ENCODE measurements at regions of chr3 and their contacts with region 1.

Region 1: DNA sequence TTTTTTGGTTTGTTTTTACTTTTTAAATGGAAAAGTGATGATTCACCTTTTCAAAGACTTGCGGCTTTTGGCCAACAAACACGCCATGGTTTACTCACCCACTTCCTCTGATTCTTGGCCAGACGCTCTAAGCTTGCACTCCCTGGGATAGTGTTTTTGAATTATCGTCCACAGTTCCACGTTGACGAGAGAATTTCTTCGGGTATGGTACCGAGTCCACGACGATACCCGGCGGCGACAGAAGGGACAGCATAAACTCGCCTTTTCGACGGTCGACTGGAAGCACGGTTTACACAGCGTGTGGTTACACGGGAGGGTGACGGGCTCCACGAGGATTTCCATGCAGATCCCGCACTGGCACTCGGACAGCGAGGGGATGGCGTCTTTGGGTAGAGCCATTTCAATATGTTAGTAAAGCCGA is 783 bp downstream of the RNF168 start:
- DNase-seq: peak; percentile 92
- H3K4me3 ChIP-seq: peak overlapping the region; percentile 61 to 84 (median 67)
- H3K27ac ChIP-seq: peak overlapping the region; percentile 85
- H3K4me1 ChIP-seq: peaks cover 13% of the 10 kb centered on the region
- H3K27me3 ChIP-seq: no peaks in the 10 kb centered on the region
- CTCF ChIP-seq: no peak
- POLR2A ChIP-seq: no peak

Region 2: GRCh38 chr3:196081791-196082618 is 420.8 kb before region 1 on chr3 and contains the start of gene TFRC:
- CTCF ChIA-PET with region 1: no interaction called
- POLR2A ChIA-PET with region 1: no interaction called
- dilution Hi-C with region 1: no loop called
- intact Hi-C with region 1: loop called (anchors 5 kb)
- DNase-seq: peak; percentile 87
- H3K4me3 ChIP-seq: peak within 1 kb of the TSS; percentile 32 to 82 (median 67)
- H3K27ac ChIP-seq: peak within 1 kb of the TSS; percentile 49
- H3K4me1 ChIP-seq: peaks cover 7% of the 10 kb centered on the region
- H3K27me3 ChIP-seq: no peaks in the 10 kb centered on the region
- CTCF ChIP-seq: no peak
- POLR2A ChIP-seq: peak; percentile 97
- total RNA-seq, gene TFRC: 58.4 and 69.6 TPM in 2 replicates

Region 3: DNA sequence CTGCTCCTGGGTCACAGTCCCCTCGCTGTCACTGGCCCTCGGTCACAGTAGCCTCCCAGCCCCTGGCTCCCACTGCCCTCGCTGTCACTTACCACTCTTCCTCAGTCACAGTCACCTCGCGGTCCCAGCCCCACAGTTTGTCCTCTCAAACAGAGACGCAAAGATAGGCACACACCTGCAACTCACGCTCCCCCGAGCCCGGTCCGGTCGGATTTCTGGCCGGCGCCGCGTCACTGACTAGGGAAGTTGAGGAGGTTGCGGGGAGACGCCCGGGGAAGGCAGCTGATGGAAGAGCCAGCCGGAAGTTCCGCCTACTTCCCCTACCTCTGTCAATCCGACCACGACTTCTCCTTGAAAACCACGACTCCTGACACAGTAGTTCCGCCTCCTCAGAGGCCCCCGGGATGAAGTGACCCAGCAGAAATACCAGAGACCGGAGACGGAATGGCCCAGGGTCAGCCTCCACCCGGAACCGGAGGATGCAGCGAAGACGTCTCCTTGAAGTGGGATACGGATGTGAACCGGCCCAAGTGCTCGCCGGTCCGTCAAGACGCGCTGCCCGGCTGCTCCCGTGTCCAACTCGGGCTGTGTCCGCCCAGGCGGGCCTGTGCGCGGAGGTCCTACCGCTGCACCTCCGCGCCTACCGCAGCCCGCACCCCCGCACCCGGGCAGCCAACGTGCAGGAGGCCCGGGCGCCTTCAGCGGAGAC is 215.2 kb before region 1 on chr3 and contains the start of gene PCYT1A:
- CTCF ChIA-PET with region 1: no interaction called
- POLR2A ChIA-PET with region 1: no interaction called
- dilution Hi-C with region 1: no loop called
- intact Hi-C with region 1: loop called (anchors 1 kb)
- DNase-seq: peak; percentile 94
- H3K4me3 ChIP-seq: peak within 1 kb of the TSS; percentile 27 to 96 (median 75)
- H3K27ac ChIP-seq: peak within 1 kb of the TSS; percentile 43
- H3K4me1 ChIP-seq: peaks cover 11% of the 10 kb centered on the region
- H3K27me3 ChIP-seq: no peaks in the 10 kb centered on the region
- CTCF ChIP-seq: no peak
- POLR2A ChIP-seq: peak; percentile 86
- total RNA-seq, gene PCYT1A: 65.5 and 75.4 TPM in 2 replicates

Region 4: DNA sequence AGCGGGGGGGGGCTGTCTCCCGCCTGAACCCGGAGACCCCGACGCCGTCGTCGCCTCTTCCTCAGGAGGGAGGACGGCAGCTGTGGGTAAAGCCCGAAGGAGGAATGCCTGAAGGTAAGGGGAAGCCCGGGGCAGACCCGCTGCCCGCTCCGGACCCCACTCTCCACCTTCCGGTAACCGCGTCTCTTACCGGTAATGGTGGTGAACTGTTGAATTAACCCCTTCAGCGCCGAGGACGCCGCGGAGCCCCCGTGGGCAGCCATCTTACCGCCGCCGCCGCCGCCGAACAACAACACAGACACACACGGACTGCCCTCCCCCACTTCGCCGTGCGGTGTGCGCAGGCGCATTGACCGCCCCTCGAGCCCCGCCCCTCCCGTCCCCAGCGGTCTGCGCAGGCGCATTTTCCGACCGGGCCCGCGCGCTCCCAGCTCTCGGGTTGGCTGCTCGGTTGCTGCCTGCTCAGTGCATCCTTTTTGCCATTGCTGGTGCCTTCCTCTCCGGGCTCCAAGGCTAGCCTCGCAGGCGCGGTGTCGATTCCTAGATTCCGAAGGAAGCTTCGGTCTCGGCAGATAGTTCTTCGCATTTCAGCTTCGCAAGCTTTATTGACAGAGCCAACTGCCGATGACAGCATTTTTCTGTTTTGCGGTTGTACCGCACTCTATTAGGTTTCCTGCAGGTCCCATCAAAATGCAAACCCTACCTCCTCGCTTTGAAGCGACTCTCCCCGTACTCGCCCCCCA is 70.5 kb before region 1 on chr3 and contains the start of gene UBXN7:
- CTCF ChIA-PET with region 1: no interaction called
- POLR2A ChIA-PET with region 1: no interaction called
- dilution Hi-C with region 1: no loop called
- intact Hi-C with region 1: loop called (anchors 1 kb)
- DNase-seq: peak; percentile 97
- H3K4me3 ChIP-seq: peak within 1 kb of the TSS; percentile 65 to 87 (median 74)
- H3K27ac ChIP-seq: peak within 1 kb of the TSS; percentile 41
- H3K4me1 ChIP-seq: peaks cover 8% of the 10 kb centered on the region
- H3K27me3 ChIP-seq: no peaks in the 10 kb centered on the region
- CTCF ChIP-seq: no peak
- POLR2A ChIP-seq: peak; percentile 85
- total RNA-seq, gene UBXN7: 55.1 and 57.0 TPM in 2 replicates